Activated CD4-positive, alpha-beta T cell treated with anti-CD3 and anti-CD28 coated beads, Interleukin-2, amount 10 ng/mL, durations not matched to agents 7 days and 5 days (primary cell): ENCODE measurements at regions of chr6 and their contacts with region 1.

Region 1: DNA sequence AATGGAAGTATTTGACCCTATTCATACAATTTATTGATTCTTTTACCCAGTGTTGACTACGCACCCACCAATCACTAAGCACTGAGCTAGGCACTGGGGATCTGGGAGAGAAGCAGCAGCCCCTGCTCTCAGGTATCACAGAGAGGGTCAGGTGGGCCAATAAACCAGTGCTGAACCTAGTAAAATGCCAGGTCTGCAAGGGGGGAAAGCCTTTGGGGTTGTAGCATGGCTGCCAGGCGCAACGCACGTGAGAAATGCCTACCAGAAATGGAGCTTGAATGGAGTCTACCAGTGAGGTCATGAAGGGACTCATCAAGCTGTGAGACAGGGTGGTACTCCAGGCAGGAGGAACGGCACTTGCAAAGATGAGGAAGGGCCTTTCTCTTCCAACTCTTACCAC is 313.6 kb downstream of the GMDS start:
- DNase-seq: no peak
- H3K4me3 Mint-ChIP-seq: no peak overlapping the region
- H3K27ac Mint-ChIP-seq: no peak overlapping the region
- H3K4me1 Mint-ChIP-seq: no peaks in the 10 kb centered on the region
- H3K27me3 Mint-ChIP-seq: no peaks in the 10 kb centered on the region

Region 2: GRCh38 chr6:1846611-1847010 is 85.2 kb before region 1 on chr6:
- CTCF ChIA-PET with region 1: no interaction called
- POLR2A ChIA-PET with region 1: interaction called, 14 read pairs
- DNase-seq: no peak
- H3K4me3 Mint-ChIP-seq: no peak overlapping the region
- H3K27ac Mint-ChIP-seq: no peak overlapping the region
- H3K4me1 Mint-ChIP-seq: no peaks in the 10 kb centered on the region
- H3K27me3 Mint-ChIP-seq: no peaks in the 10 kb centered on the region